ENCODE measurements at regions of chr21 and their contacts with region 1.

Region 1: DNA sequence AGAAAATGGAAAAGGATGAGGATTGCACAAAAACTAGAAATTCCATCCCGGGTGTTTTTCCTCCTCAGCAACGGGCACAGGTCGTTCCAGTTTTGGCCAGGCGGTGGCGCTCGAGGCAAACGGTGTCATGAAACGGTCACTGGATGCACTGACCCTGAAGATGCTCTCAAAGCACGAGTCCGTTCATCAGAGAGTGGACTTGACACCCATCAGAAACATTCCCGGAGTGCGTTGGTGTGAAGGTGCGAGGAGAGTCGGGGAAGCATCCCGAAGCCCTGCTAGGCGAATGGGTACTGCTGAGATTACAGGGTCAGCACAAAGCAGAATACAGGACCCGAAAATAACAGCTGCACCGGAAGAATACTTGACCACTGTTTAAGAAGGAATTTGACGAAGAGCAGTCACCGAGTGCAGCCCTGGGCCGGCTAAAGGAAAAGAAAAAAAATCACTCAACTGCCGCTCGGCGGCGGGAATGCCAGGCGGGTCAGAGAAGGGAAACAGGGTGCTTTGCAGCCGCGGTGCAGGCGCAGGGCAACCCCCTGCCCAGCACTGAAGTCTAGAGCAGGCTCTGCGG is 71.7 kb upstream of the ETS2 start:
- DNase-seq: peak; percentile 77
- H3K4me3 Mint-ChIP-seq: peak overlapping the region; percentile 69
- H3K27ac Mint-ChIP-seq: no peak overlapping the region
- H3K4me1 Mint-ChIP-seq: peaks cover 8% of the 10 kb centered on the region
- H3K27me3 Mint-ChIP-seq: peaks cover 17% of the 10 kb centered on the region

Region 2: GRCh38 chr21:38505654-38506515 is 228.2 kb before region 1 on chr21:
- CTCF ChIA-PET with region 1: no interaction called
- intact Hi-C with region 1: loop called (anchors 10 kb)
- DNase-seq: peak; percentile 49
- H3K4me3 Mint-ChIP-seq: no peak overlapping the region
- H3K27ac Mint-ChIP-seq: no peak overlapping the region
- H3K4me1 Mint-ChIP-seq: no peaks in the 10 kb centered on the region
- H3K27me3 Mint-ChIP-seq: peaks cover 31% of the 10 kb centered on the region

Region 3: GRCh38 chr21:38798481-38798882 is 64.4 kb after region 1 on chr21:
- CTCF ChIA-PET with region 1: interaction called, 6 read pairs
- intact Hi-C with region 1: loop called (anchors 1 kb)
- DNase-seq: peak; percentile 30
- H3K4me3 Mint-ChIP-seq: no peak overlapping the region
- H3K27ac Mint-ChIP-seq: no peak overlapping the region
- H3K4me1 Mint-ChIP-seq: peaks cover 6% of the 10 kb centered on the region
- H3K27me3 Mint-ChIP-seq: peaks cover 2% of the 10 kb centered on the region

Region 4: DNA sequence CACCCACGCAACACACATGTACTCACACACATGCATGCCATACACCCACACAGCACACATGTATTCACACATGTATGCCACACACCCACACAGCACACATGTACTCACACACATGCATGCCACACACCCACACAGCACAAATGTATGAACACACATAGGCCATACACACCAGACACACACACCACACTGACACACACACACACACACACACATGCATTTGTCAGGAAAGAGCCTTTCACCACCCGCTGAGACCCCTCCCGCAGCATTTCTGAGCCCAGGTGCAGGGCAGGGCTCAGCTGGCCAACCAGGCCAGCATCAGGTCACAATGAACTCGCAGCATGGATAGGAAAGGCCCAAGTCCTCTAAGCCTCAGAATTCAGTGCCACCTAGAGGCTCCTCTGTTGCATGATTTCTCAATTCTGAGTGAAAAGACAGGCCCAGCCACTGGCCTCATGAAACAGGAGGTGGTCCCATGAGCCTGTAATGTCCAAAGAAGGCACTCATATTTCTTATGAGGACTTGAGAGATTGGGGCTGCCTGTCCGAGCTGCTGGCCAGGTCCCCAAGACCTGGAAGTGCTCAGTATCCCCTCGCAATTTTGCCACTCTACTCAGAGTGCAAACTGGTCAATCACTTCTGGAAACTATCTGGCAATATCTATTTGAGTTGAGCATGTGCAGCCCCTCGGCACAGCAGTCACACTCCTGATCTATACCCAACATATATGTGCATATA is 391.9 kb after region 1 on chr21:
- CTCF ChIA-PET with region 1: interaction called, 3 read pairs
- intact Hi-C with region 1: loop called (anchors 1 kb)
- DNase-seq: peak; percentile 26
- H3K4me3 Mint-ChIP-seq: no peak overlapping the region
- H3K27ac Mint-ChIP-seq: no peak overlapping the region
- H3K4me1 Mint-ChIP-seq: no peaks in the 10 kb centered on the region
- H3K27me3 Mint-ChIP-seq: no peaks in the 10 kb centered on the region

Region 5: GRCh38 chr21:39175154-39175553 is 441.1 kb after region 1 on chr21:
- CTCF ChIA-PET with region 1: no interaction called
- intact Hi-C with region 1: loop called (anchors 5 kb)
- DNase-seq: no peak
- H3K4me3 Mint-ChIP-seq: no peak overlapping the region
- H3K27ac Mint-ChIP-seq: no peak overlapping the region
- H3K4me1 Mint-ChIP-seq: peaks cover 15% of the 10 kb centered on the region
- H3K27me3 Mint-ChIP-seq: no peaks in the 10 kb centered on the region

Measured in activated naive CD4-positive, alpha-beta T cell treated with anti-CD3 and anti-CD28 coated beads for 36 hours (primary cell).